ENCODE measurements at regions of chr5 and their contacts with region 1.

Region 1: DNA sequence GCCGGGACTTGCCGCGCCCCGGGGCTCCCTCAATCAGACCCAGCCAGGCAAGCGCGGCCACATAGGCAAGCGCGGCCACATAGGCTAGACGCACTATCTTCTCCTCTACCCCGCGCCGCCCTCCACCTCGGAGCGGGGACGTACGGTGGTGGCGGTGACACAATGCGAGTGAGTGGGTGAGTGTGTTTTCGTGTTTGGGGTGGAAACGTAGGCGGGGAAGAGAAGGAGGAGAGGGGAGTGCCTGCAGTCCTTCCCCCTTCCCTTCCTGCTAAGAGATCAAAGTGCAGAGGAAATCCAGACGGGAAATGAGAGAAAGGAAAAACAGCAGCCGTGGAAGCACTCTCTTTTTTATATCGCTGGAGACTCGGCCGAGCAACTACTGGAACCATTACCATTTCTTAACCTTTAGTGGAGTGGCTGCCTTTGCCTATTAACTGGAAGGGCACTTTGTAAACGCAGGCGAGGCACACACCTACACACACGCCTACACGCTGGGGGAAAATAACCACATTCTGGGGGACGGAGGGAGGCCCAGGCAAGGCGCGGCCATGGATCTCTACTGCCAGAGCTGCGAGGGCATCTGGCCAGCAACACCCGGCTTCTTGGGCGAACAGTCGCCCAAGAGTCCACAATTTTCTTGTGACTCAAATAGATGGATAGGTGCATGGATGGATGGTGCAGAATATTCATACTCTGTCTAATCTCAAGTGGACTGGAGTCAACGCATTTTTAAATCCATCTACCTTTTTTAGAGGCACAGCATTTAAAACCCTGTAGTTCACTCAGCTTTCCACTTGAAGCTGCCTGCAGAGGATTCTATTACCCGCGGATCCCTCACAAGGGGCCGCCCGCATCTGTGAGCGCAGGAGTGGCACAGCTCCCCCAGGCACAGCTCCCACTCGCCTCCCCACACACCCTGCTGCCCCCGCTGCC is 2.1 kb downstream of the EDIL3 start:
- DNase-seq: peak; percentile 75

Region 2: GRCh38 chr5:84281383-84281782 is 101.2 kb before region 1 on chr5:
- intact Hi-C with region 1: loop called (anchors 5 kb)
- DNase-seq: no peak

Measured in cardiac septum (tissue), 1 donor.